ENCODE measurements at regions of chr1 and their contacts with region 1.

Region 1: DNA sequence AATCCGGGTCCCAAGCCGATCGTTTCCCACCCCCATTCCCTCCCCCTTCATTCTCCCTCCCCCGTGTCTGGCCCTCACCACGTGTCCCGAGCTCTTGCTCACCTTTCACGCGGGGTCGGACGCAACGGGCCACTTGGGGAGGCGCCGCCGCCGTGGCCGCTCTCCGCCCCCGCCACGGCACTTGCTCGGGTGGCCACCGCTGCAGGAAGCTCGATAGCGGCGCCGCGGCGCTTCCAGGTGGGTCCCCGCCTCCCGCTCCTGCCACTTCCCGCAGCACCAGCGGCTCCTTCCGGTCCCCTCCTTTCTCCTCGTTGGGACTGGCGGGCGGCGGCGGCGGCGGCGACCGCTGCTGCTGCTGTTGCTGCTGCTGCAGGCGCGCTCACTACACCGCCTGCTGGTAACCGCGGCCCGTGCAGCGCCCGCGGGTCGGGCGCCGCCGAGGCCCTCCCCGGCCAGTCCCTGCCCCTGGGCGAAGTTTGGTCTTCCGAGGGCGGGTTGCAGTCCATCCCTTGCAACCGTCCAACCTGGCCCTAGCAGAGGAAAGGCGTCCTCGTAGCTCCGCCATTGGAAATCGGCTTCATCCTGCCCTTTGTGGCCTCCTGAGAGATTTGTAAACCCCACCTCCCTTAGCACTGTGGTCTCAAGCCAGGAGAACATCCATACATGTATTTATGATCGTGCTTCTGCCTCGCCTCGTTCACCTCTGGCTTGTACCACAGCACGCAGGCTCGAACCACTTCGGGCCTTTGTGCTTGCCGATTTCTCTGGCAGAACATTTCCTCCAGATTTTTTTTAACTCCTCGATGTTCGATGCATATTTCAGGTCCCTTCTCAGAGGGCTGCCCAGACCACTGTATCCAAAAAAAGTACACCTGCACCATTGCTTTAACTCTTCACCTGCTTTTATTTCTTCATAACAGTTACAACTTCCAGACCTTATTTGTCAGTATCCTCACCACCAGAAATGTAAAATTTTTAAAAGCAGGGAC is 996 bp upstream of the ZZZ3 start:
- DNase-seq: peak; percentile 85 to 89
- ATAC-seq: peak; percentile 75 to 81
- H3K4me3 ChIP-seq: peak overlapping the region; percentile 87 to 93 (median 88)
- H3K27ac ChIP-seq: peak overlapping the region; percentile 86 to 99 (median 98)
- H3K4me1 ChIP-seq: peaks cover 35 to 37% of the 10 kb centered on the region in 2 donors
- H3K27me3 ChIP-seq: no peaks in the 10 kb centered on the region
- CTCF ChIP-seq: peak; percentile 84 to 97 (median 95)
- POLR2A ChIP-seq: peak; percentile 56 to 60

Region 2: DNA sequence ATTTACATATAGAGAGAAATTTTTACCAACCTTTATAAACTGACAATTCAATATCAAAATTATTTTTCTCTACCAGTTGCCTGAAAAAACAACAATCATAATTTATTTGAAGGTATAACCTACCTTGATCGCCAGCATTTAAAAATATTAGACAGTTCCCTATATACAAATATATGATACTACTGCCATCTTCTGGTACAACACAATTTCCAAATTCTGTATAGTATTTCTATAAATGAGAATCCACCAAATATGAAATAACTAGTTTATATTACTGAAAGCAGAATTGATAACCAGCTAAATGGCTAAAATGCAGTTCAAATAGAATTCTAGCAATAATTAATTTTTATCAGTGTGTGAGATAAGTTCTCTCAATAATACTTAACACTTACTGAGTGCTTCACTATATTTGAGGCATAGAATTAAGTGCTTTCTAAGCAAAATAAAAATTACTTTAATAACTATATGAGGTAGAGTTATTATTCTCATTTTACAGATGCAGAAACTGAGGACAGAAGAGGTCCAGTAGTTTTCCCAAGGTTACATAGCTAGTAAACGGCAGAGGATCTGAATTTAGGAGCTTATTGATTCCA is 539.8 kb before region 1 on chr1:
- in situ Hi-C with region 1: no loop called
- intact Hi-C with region 1: loop called (anchors 5 kb)
- DNase-seq: no peak
- ATAC-seq: no peak
- H3K4me3 ChIP-seq: no peak overlapping the region
- H3K27ac ChIP-seq: no peak overlapping the region
- H3K4me1 ChIP-seq: no peaks in the 10 kb centered on the region
- H3K27me3 ChIP-seq: no peaks in the 10 kb centered on the region
- CTCF ChIP-seq: peak in 2 of 5 experiments; percentile 4 to 18
- POLR2A ChIP-seq: no peak

Region 3: GRCh38 chr1:77565321-77565720 is 118.1 kb before region 1 on chr1:
- in situ Hi-C with region 1: no loop called
- intact Hi-C with region 1: no loop called
- DNase-seq: no peak
- ATAC-seq: no peak
- H3K4me3 ChIP-seq: no peak overlapping the region
- H3K27ac ChIP-seq: no peak overlapping the region
- H3K4me1 ChIP-seq: no peaks in the 10 kb centered on the region
- H3K27me3 ChIP-seq: no peaks in the 10 kb centered on the region
- CTCF ChIP-seq: no peak
- POLR2A ChIP-seq: no peak

Region 4: GRCh38 chr1:77594366-77595112 is 88.9 kb before region 1 on chr1:
- in situ Hi-C with region 1: no loop called
- intact Hi-C with region 1: loop called (anchors 10 kb)
- DNase-seq: no peak
- ATAC-seq: no peak
- H3K4me3 ChIP-seq: no peak overlapping the region
- H3K27ac ChIP-seq: no peak overlapping the region
- H3K4me1 ChIP-seq: peaks cover 7 to 8% of the 10 kb centered on the region in 2 donors
- H3K27me3 ChIP-seq: no peaks in the 10 kb centered on the region
- CTCF ChIP-seq: no peak
- POLR2A ChIP-seq: no peak

Region 5: DNA sequence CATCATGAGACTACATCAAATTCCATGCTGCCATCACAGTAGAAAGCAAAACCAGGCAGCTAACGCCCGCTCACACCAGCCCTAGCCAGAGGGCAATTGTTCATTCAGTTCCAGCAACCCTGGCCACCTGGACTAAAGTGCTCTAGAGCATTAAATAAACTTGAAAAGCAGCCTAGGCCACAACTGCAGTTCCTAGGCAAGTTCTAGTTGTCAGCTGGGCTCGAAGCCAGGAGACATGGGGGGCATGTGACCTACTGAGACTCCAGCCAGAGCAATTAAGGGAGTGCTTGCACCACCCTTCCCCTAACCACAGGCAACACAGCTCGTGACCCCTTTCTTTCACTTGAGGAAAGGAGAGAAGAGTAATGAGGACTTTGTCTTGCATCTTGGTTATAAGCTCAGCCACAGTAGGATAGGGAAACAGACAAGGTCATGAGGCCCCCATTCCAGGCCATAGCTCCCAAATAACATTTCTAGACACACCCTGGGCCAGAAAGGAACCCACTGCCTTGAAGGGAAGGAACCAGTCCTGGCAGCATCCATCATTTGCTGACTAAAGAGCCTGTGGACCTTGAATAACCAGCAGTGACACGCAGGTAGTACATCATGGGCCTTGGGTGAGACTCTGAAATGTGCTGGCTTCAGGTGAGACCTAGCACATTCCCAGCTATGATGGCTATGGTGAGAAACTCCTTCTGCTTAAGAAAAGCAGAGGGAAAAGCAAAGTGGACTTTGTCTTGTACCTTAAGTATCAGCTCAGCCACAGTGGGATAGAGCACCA is 78.0 kb before region 1 on chr1:
- in situ Hi-C with region 1: no loop called
- intact Hi-C with region 1: no loop called
- DNase-seq: peak; percentile 58 to 64
- ATAC-seq: peak; percentile 36 to 39
- H3K4me3 ChIP-seq: no peak overlapping the region
- H3K27ac ChIP-seq: peak overlapping the region in 1 of 4 donors; percentile 14
- H3K4me1 ChIP-seq: peaks cover 4 to 6% of the 10 kb centered on the region in 2 donors
- H3K27me3 ChIP-seq: no peaks in the 10 kb centered on the region
- CTCF ChIP-seq: no peak
- POLR2A ChIP-seq: no peak

Region 6: GRCh38 chr1:77900687-77901293 is 217.3 kb after region 1 on chr1:
- in situ Hi-C with region 1: no loop called
- intact Hi-C with region 1: loop called (anchors 5 kb)
- DNase-seq: no peak
- ATAC-seq: peak; percentile 55 to 59
- H3K4me3 ChIP-seq: peak overlapping the region in 3 of 4 donors; percentile 0 to 24 (median 21)
- H3K27ac ChIP-seq: peak overlapping the region; percentile 74 to 86 (median 80)
- H3K4me1 ChIP-seq: peaks cover 39 to 53% of the 10 kb centered on the region in 2 donors
- H3K27me3 ChIP-seq: no peaks in the 10 kb centered on the region
- CTCF ChIP-seq: peak; percentile 44 to 67 (median 58)
- POLR2A ChIP-seq: no peak

Region 7: DNA sequence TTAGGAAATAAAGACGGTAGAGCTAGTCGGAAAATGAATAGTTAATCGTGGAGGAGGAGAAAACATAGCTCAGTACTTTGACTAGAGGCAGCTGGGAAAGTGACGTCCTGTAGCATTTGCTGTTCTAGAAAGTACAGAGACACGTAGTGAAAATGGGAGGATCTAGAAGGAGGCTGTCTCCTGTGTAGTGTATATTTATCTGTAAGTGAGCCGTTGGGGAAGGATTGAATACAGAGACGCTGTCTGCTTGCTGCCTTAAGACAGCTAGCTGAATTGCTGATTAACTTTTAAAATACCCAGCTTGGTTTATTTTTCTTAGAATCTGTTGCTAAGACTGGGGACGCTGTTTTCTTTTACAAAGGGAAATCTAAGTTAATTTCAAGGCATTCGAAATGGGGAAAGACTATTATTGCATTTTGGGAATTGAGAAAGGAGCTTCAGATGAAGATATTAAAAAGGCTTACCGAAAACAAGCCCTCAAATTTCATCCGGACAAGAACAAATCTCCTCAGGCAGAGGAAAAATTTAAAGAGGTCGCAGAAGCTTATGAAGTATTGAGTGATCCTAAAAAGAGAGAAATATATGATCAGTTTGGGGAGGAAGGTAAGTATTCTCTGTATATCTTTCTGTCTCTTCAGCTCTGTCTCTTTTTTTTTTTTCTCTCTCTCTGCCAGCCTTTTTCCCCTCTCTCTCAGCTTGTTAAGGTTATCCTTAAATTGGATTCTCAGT is 321.4 kb after region 1 on chr1 and contains the start of gene DNAJB4:
- in situ Hi-C with region 1: no loop called
- intact Hi-C with region 1: loop called (anchors 2 kb)
- DNase-seq: peak; percentile 83 to 84
- ATAC-seq: peak; percentile 99
- H3K4me3 ChIP-seq: peak within 1 kb of the TSS; percentile 65 to 81 (median 70)
- H3K27ac ChIP-seq: peak within 1 kb of the TSS; percentile 83 to 97 (median 91)
- H3K4me1 ChIP-seq: peaks cover 19 to 41% of the 10 kb centered on the region in 2 donors
- H3K27me3 ChIP-seq: no peaks in the 10 kb centered on the region
- CTCF ChIP-seq: peak in 1 of 5 experiments; percentile 13
- POLR2A ChIP-seq: peak; percentile 92 to 100
- total RNA-seq, gene DNAJB4: 35.6 to 84.9 (median 45.3) TPM

Region 8: GRCh38 chr1:78019018-78019417 is 335.6 kb after region 1 on chr1:
- in situ Hi-C with region 1: no loop called
- intact Hi-C with region 1: no loop called
- DNase-seq: no peak
- ATAC-seq: no peak
- H3K4me3 ChIP-seq: no peak overlapping the region
- H3K27ac ChIP-seq: no peak overlapping the region
- H3K4me1 ChIP-seq: peaks cover 18 to 21% of the 10 kb centered on the region in 2 donors
- H3K27me3 ChIP-seq: no peaks in the 10 kb centered on the region
- CTCF ChIP-seq: no peak
- POLR2A ChIP-seq: no peak

Measured in gastrocnemius medialis (tissue), 4 donors.